Activated naive CD4-positive, alpha-beta T cell treated with anti-CD3 and anti-CD28 coated beads, Interleukin-2, amount 10 ng/mL, durations not matched to agents 7 days and 5 days (primary cell): ENCODE measurements at regions of chr12 and their contacts with region 1.

Region 1: GRCh38 chr12:109110988-109111495 is 5.3 kb upstream of the ACACB start:
- DNase-seq: peak; percentile 70
- H3K4me3 Mint-ChIP-seq: peak overlapping the region; percentile 73
- H3K27ac Mint-ChIP-seq: peak overlapping the region; percentile 79
- H3K4me1 Mint-ChIP-seq: peaks cover 32% of the 10 kb centered on the region
- H3K27me3 Mint-ChIP-seq: no peaks in the 10 kb centered on the region

Region 2: DNA sequence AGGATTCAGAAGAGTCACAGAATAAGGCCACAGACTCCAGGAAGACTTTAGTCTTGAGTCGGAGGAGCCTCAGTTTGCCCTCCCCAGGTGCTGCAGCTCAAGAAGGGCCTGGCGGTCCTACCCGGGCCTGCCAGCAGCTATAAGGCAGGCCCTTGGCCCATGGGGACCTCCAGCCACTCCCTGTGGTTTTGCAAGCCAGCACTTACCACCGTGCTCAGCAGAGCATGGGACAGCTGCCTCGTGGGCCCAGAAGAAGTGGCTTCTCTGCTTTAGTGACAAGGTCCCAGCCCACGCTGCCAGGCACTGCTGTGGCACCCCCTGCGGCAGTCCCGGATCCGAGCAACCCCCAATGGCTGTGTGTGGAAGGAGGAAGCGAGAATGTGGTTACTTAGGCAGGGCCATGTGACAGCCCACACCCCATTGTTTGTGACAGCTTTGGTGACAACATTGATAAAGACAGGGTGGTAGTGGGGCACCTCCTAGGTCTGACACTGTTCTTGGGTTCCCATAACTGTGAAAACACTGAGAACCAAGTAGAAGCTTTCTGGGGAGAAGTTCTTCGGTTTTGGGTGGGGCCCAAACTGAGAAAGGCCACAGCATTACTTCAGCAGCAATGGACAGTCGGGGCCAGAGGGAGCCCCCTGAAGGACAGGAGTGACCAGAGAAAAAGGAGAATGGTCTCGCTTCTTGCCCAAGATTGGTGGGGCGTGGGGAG is 477.4 kb before region 1 on chr12 and contains the start of gene SELPLG:
- CTCF ChIA-PET with region 1: no interaction called
- DNase-seq: peak; percentile 94
- H3K4me3 Mint-ChIP-seq: peak within 1 kb of the TSS; percentile 100
- H3K27ac Mint-ChIP-seq: peak within 1 kb of the TSS; percentile 100
- H3K4me1 Mint-ChIP-seq: peaks cover 66% of the 10 kb centered on the region
- H3K27me3 Mint-ChIP-seq: peaks cover 3% of the 10 kb centered on the region

Region 3: DNA sequence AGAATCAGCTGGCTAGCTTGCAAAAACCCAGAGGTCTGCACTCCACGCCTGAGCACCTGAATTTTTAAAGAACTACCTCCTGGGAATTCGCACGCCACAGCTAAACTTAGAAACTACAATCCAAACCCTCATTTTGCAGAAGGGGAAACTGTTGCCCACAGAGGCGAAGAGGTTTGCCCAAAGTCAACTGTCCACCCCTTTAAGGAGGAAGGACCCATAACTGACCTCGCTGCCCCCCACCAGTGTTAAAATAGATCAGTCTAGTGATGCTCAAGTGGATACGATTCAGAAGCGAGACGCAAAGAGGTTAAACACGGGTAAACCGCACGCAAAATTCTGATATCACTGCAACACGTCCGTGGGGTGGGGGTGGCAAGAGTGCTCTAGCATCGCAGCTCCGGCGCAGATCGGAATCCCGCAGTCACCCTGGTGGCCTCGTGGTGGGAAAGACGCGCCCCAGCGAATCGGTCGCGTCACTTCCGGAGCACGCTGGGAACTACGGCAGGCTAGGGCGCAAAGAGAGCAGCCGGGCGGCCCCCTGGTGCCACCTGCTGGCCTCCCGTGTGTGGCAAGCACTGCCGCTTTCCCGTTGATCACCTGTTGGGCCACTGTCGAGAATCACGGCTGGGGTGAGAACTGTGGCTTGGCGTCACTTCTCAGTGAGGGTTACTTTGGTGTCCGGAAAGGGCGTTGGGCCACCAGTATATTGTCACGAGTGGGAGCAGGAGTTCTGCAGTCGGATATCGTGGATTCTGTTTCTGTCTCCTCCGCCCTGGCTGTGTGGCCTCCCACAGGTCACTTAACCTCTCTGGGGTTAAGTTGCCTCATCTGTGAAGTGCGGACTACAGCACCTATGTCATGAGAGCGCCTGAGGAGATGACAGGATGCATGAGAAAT is 17.8 kb before region 1 on chr12 and contains the start of gene ALKBH2:
- CTCF ChIA-PET with region 1: interaction called, 17 read pairs
- DNase-seq: peak; percentile 95
- H3K4me3 Mint-ChIP-seq: peak within 1 kb of the TSS; percentile 76
- H3K27ac Mint-ChIP-seq: peak within 1 kb of the TSS; percentile 83
- H3K4me1 Mint-ChIP-seq: peaks cover 42% of the 10 kb centered on the region
- H3K27me3 Mint-ChIP-seq: no peaks in the 10 kb centered on the region

Region 4: DNA sequence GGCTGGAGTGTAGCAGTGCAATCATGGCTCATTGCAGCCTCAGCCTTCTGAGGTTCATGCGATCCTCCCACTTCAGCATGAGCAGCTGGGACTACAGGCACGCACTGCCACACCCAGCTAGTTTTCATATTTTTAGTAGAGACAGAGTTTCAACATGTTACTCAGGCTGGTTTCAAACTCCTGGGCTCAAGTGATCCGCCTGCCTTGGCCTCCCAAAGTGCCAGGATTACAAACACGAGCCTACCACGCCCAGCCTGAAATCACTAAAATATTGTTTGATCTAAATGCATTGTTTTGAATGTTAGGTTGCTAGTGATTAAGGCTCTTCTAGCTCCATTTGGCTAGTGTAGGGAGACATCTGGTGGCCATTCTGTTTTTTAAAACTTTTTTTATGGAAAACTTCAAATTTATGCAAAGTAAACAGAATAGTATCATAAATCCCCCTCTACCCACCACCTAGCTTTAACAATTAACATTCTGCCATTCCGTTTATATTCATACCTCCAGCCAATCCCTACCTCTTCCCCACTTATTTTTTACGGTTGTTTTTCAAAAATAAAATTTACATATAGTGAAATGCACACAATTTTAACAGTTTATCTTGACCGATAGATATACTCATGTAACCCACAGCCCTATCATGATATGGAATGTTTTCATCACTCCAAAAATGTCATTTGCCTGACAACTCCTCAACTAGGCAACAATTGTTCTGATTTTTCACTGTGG is 274.5 kb after region 1 on chr12:
- CTCF ChIA-PET with region 1: interaction called, 15 read pairs
- DNase-seq: no peak
- H3K4me3 Mint-ChIP-seq: no peak overlapping the region
- H3K27ac Mint-ChIP-seq: no peak overlapping the region
- H3K4me1 Mint-ChIP-seq: no peaks in the 10 kb centered on the region
- H3K27me3 Mint-ChIP-seq: peaks cover 28% of the 10 kb centered on the region

Region 5: DNA sequence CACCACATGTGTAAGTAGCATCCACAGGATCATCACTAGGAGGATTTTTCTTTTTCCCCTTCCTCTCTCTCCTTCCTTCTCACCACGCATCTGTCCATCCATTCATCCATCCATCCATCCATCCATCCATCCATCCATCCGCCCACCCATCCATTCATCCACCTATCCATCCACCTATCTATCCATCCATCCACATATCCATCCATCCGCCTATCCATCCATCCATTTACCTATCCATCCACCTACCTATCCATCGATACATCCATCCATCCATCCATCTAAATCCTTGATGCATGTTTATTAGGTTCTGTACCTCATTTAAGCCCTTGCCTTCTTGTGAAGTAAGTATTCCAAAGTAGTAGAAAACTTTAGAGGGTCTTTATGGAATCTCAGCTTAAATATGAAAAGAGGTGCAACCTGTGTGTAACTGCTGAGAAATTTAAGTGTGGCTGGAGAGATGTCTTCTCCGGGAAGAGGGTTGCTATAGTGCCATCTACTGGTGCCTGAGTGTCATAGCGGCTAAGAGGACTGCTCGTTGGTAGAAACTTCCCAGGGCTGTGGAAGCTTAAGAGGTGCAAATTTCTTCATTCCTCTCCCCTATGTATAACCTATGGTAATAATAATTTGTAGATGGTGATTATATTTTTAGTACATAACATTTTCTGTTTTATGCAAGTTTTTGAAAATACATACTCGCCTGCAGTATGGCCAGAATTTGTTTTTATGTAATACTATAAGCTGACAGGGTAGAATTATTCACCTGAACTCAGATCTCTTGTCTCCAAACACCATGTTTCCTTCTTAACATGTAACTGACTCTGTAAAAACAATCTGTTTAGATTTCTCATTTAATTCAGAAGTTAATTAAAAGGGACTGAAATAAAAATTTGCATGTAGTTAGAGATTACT is 282.6 kb after region 1 on chr12:
- CTCF ChIA-PET with region 1: interaction called, 15 read pairs
- DNase-seq: peak; percentile 54
- H3K4me3 Mint-ChIP-seq: no peak overlapping the region
- H3K27ac Mint-ChIP-seq: no peak overlapping the region
- H3K4me1 Mint-ChIP-seq: no peaks in the 10 kb centered on the region
- H3K27me3 Mint-ChIP-seq: peaks cover 21% of the 10 kb centered on the region

Region 6: GRCh38 chr12:110245369-110245772 is 1134.3 kb after region 1 on chr12:
- CTCF ChIA-PET with region 1: no interaction called
- DNase-seq: peak; percentile 75
- H3K4me3 Mint-ChIP-seq: no peak overlapping the region
- H3K27ac Mint-ChIP-seq: no peak overlapping the region
- H3K4me1 Mint-ChIP-seq: no peaks in the 10 kb centered on the region
- H3K27me3 Mint-ChIP-seq: peaks cover 37% of the 10 kb centered on the region